MCF 10A (cell line): ENCODE measurements at regions of chr3 and their contacts with region 1.

Region 1: DNA sequence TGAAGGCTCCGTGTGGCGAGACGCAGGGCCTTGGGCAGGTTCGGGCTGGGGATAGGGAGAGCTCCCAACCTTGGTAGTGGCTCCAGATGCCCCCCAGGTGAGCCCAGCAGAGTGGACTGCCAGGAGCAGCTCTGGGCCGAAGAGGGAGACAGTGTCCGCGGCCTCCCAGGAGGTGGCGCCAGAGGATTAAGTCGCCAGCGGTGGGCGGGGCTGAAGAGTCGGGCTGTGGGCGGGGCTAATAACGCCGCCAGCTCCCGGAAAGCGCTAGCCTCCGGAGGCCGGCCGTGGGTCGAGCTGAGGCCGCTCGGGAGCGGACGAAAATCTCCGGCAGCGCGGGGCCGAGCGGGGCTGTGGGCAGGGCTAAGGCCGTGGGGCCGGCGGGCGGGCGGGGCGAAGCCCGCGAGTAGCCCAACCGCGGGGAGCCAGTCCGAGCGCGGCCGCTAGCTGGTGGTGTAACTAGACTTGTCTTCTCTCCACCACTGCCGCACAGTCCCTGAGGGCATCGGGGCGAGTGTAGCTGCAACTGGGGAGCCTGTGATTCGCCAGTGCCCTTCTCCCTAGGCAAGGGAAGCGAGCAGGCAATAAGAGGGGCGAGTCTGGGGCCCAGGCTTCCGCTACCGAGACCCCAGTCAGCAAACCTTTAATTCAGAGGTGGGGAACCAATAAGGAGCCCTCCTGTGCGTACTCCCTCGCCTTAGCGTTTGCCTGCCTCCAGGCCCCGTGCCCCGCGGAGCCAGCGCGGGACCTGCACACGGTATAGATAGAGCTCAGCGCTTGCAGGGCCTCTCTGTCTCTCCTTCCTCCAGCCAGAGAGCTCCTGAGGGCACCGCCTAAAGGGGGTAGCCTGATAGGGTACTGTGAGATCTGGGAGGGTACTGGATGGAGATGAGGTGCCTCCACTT is 14.4 kb upstream of the BSN start:
- DNase-seq: peak; percentile 91
- H3K4me3 Mint-ChIP-seq: peak overlapping the region; percentile 70
- H3K27ac Mint-ChIP-seq: no peak overlapping the region
- H3K4me1 Mint-ChIP-seq: no peaks in the 10 kb centered on the region
- H3K27me3 Mint-ChIP-seq: peaks cover 22% of the 10 kb centered on the region
- CTCF ChIP-seq: peak; percentile 82

Region 2: DNA sequence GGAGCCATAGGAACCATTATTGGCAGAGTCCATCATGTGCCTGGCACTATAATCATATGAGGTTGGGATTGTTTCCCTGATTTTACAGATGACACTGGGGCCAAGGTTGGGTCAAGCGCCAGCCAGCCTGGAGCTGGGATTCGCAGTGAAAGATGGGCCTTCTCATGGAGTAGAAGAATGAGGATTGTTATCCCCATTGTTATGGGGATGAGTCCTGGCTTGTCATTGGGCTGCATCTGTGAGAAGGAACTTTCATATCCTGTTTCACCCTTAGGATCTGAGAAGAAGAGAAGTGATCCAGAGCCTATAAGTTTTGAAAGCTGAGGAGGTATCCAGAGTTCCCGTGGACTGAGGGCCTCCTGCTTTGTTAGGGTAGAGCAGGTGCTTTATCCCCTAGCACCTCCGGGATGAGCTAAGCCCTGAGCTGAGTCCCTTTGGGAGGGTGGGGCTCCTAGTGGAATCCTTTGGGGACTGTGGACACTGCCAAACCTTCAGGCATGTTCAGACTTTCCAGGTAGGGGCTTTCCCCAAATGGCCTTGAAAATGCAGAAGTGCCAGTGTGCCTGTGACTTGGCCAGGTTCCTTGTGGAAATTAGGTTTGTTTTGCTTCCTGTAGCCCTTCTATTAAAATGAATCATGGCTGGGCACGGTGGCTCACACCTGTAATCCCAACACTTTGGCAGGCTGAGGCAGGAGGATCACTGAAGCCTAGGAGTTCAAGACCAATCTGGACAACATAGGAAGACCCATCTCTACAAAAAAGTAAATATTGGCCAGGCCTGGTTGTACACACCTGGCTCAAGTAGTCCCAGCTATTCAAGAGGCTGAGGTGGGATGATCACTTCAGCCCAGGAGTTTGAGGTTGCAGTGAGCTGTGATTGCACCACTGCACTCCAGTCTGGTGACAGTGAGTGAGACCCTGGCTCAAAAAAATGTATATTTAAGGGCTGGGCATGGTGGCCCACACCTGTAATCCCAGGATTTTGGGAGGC is 15.9 kb before region 1 on chr3:
- CTCF ChIA-PET with region 1: interaction called, 12 read pairs
- POLR2A ChIA-PET with region 1: interaction called, 3 read pairs
- intact Hi-C with region 1: no loop called
- DNase-seq: peak; percentile 41
- H3K4me3 Mint-ChIP-seq: no peak overlapping the region
- H3K27ac Mint-ChIP-seq: peak overlapping the region; percentile 46
- H3K4me1 Mint-ChIP-seq: peaks cover 7% of the 10 kb centered on the region
- H3K27me3 Mint-ChIP-seq: no peaks in the 10 kb centered on the region
- CTCF ChIP-seq: no peak

Region 3: GRCh38 chr3:49553692-49554632 is 14.1 kb after region 1 on chr3 and contains the start of gene BSN:
- CTCF ChIA-PET with region 1: interaction called, 22 read pairs
- POLR2A ChIA-PET with region 1: interaction called, 5 read pairs
- intact Hi-C with region 1: no loop called
- DNase-seq: peak; percentile 64
- H3K4me3 Mint-ChIP-seq: peak within 1 kb of the TSS; percentile 76
- H3K27ac Mint-ChIP-seq: no peak within 1 kb of the TSS
- H3K4me1 Mint-ChIP-seq: peaks cover 4% of the 10 kb centered on the region
- H3K27me3 Mint-ChIP-seq: peaks cover 40% of the 10 kb centered on the region
- CTCF ChIP-seq: no peak
- total RNA-seq, gene BSN: 0.10 and 0.37 TPM in 2 replicates

Region 4: GRCh38 chr3:49638445-49638844 is 98.5 kb after region 1 on chr3:
- CTCF ChIA-PET with region 1: interaction called, 24 read pairs
- POLR2A ChIA-PET with region 1: interaction called, 5 read pairs
- intact Hi-C with region 1: no loop called
- DNase-seq: peak; percentile 91
- H3K4me3 Mint-ChIP-seq: peak overlapping the region; percentile 15
- H3K27ac Mint-ChIP-seq: no peak overlapping the region
- H3K4me1 Mint-ChIP-seq: peaks cover 22% of the 10 kb centered on the region
- H3K27me3 Mint-ChIP-seq: no peaks in the 10 kb centered on the region
- CTCF ChIP-seq: no peak

Region 5: GRCh38 chr3:49668414-49668797 is 128.5 kb after region 1 on chr3:
- CTCF ChIA-PET with region 1: interaction called, 232 read pairs
- POLR2A ChIA-PET with region 1: interaction called, 51 read pairs
- intact Hi-C with region 1: loop called (anchors 1 kb)
- DNase-seq: no peak
- H3K4me3 Mint-ChIP-seq: no peak overlapping the region
- H3K27ac Mint-ChIP-seq: no peak overlapping the region
- H3K4me1 Mint-ChIP-seq: peaks cover 18% of the 10 kb centered on the region
- H3K27me3 Mint-ChIP-seq: no peaks in the 10 kb centered on the region
- CTCF ChIP-seq: no peak

Region 6: DNA sequence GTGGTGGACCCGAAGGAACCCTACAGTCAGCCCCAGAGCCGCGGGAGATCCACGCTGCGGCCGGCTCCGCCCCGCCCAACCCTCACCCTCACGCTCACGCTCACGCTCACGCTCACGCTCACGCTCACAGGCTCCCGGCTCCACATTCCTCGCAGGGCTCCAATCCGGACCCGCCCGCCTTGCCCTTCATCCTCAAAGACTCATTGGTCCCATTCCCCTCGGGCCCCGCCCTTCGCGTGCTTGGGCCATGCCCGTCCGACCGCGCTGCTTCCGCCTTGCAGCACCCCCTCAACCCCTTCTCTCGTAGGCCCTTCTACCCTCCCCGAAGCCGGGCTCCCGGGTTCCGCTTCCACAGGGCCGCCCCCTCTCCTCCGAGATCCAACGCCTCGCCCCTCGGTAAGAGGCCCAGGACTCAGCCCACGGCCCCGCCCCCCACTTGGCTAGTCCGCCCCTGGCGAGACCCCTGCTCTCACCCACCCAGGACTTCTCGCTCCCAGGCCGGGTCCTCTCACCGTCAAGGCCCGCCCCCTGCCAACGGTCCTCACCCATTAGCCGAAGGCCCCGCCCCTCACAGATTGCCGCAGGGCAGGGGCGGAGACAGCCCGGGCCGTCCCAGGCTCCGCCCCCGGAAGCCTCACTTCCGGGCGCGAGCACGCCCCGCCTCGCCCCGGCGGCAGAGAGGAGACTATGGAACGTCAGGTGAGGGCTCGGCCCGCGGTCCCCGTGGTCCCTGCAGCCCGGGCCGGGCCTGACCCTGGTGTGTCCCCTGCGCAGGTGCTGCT is 134.0 kb after region 1 on chr3 and contains the start of gene APEH:
- CTCF ChIA-PET with region 1: interaction called, 232 read pairs
- POLR2A ChIA-PET with region 1: interaction called, 51 read pairs
- intact Hi-C with region 1: loop called (anchors 1 kb)
- DNase-seq: peak; percentile 98
- H3K4me3 Mint-ChIP-seq: peak within 1 kb of the TSS; percentile 93
- H3K27ac Mint-ChIP-seq: peak within 1 kb of the TSS; percentile 99
- H3K4me1 Mint-ChIP-seq: peaks cover 6% of the 10 kb centered on the region
- H3K27me3 Mint-ChIP-seq: no peaks in the 10 kb centered on the region
- CTCF ChIP-seq: no peak
- total RNA-seq, gene APEH: 95.8 and 127 TPM in 2 replicates